CD4-positive, alpha-beta T cell (primary cell): ENCODE measurements at regions of chr13 and their contacts with region 1.

Region 1: GRCh38 chr13:27424246-27425157 is at the start of gene GTF3A:
- DNase-seq: peak; percentile 69 to 97 (median 87)
- ATAC-seq: peak; percentile 53
- H3K4me3 ChIP-seq: peak within 1 kb of the TSS; percentile 79
- H3K4me3 Mint-ChIP-seq: peak within 1 kb of the TSS; percentile 90
- H3K27ac ChIP-seq: peak within 1 kb of the TSS; percentile 91 to 95
- H3K27ac Mint-ChIP-seq: peak within 1 kb of the TSS; percentile 95
- H3K4me1 ChIP-seq: peaks cover 50% of the 10 kb centered on the region
- H3K4me1 Mint-ChIP-seq: peaks cover 39% of the 10 kb centered on the region
- H3K27me3 ChIP-seq: no peaks in the 10 kb centered on the region
- H3K27me3 Mint-ChIP-seq: no peaks in the 10 kb centered on the region
- CTCF ChIP-seq: no peak
- total RNA-seq, gene GTF3A: 129 to 132 TPM

Region 2: DNA sequence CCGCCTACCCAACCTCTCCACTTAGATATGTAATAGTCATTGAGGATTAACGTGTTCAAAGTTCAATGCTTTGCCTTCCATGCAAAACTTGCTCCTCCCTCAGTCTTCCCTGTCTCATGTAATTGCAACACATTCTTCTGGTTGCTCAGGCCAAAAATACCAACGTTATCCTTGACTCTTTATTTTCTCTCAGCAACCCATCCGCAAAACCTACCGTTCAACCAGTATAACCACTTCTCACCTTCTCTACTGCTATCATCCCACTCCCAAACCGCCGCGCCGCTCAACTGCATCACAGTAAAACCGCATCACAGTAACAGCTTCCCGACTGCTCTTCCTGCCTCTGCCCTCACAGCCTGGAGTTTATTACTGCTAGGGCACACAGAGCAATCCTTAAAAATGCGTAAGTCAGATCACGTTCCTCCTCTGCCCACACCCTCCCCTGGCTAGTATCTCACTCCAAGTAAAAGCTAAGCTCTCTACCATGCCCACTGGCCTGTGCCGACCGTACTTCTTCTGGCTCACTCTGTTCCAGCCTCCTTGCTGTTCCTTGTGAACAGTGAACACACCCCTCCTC is 17.7 kb after region 1 on chr13:
- CTCF ChIA-PET with region 1: interaction called, 26 read pairs
- POLR2A ChIA-PET with region 1: interaction called, 389 read pairs
- intact Hi-C with region 1: loop called (anchors 2 kb)
- DNase-seq: peak in 9 of 14 experiments; percentile 22 to 70 (median 51)
- ATAC-seq: peak; percentile 73
- H3K4me3 ChIP-seq: peak overlapping the region; percentile 25
- H3K4me3 Mint-ChIP-seq: peak overlapping the region; percentile 62
- H3K27ac ChIP-seq: peak overlapping the region; percentile 13 to 53
- H3K27ac Mint-ChIP-seq: peak overlapping the region; percentile 77
- H3K4me1 ChIP-seq: peaks cover 65% of the 10 kb centered on the region
- H3K4me1 Mint-ChIP-seq: peaks cover 60% of the 10 kb centered on the region
- H3K27me3 ChIP-seq: no peaks in the 10 kb centered on the region
- H3K27me3 Mint-ChIP-seq: no peaks in the 10 kb centered on the region
- CTCF ChIP-seq: no peak

Region 3: DNA sequence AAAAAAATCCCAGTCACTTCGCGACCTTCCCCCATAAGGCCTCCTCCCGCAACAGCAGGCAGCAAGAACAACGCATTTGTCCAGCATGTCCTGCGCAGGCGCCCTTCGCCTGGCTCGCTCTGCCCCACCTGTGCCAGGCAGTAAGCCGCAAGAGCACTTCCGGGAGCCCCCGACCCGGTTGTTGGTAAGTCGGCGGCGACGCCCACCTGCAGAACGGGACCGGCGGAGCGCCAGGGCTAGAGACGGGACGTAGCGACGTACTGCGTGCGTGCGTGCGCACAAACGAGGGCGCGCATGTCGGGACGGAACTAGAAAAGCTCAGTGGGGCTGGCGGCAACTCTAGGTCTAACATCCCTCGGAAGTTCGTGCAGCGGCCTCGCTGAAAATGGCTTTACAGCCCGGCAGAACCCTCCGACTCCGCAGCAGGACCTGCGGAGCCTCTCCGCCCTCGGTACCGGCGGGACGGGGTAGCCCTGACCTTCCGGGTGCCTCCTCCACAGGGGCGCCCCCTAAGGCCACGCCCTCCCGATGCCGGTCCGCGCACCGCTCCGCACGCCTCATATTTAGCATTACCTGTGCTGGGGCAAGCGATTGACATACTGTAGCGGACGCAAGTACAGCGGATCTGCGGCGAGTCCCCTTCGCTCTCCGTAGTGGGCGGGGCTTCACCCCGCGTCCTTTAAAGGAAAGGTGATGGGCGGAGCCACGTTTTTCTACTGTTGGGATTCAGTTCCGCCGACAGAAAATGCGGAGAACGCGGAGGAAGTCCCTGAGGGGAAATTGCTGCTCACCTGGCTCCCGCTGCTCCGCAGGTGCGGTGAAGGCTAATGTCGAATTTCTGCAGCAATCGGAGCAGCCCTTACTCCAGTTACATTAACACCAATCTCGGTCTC is 25.7 kb after region 1 on chr13 and contains the start of gene MTIF3:
- CTCF ChIA-PET with region 1: interaction called, 26 read pairs
- POLR2A ChIA-PET with region 1: interaction called, 389 read pairs
- intact Hi-C with region 1: loop called (anchors 1 kb)
- DNase-seq: peak; percentile 95 to 99 (median 97)
- ATAC-seq: peak; percentile 79
- H3K4me3 ChIP-seq: peak within 1 kb of the TSS; percentile 83
- H3K4me3 Mint-ChIP-seq: peak within 1 kb of the TSS; percentile 98
- H3K27ac ChIP-seq: peak within 1 kb of the TSS; percentile 95 to 97
- H3K27ac Mint-ChIP-seq: peak within 1 kb of the TSS; percentile 97
- H3K4me1 ChIP-seq: peaks cover 58% of the 10 kb centered on the region
- H3K4me1 Mint-ChIP-seq: peaks cover 74% of the 10 kb centered on the region
- H3K27me3 ChIP-seq: no peaks in the 10 kb centered on the region
- H3K27me3 Mint-ChIP-seq: no peaks in the 10 kb centered on the region
- CTCF ChIP-seq: peak; percentile 31
- total RNA-seq, gene MTIF3: 13.6 to 14.5 TPM

Region 4: DNA sequence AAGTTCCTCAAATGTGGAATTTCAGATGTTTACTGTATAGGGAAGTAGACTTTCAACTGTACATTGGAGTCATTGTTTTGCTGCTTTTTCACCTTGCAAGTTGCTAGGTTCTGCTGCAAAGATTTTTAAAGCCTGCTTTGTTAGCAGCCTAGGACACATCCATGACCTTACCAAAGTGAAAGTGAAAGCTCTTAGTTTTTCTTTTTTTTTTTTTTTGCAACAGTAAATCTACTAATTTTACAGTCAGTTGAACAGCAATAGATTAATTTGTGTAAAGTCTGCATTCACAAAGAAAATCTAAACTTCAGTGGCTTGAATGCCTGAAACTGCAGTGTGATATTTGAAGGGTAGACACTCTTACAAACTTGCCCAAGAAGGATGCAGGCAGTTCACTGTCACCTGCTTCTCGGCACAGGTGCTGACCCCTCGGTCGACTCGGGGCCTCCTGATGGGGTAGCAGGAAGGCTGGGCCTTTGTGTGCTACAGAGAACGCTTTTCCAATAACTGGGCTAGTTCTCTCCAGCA is 30.9 kb after region 1 on chr13:
- CTCF ChIA-PET with region 1: interaction called, 23 read pairs
- POLR2A ChIA-PET with region 1: interaction called, 389 read pairs
- intact Hi-C with region 1: loop called (anchors 1 kb)
- DNase-seq: peak in 3 of 14 experiments; percentile 30 to 41 (median 38)
- ATAC-seq: no peak
- H3K4me3 ChIP-seq: peak overlapping the region; percentile 64
- H3K4me3 Mint-ChIP-seq: peak overlapping the region; percentile 94
- H3K27ac ChIP-seq: peak overlapping the region; percentile 55 to 81
- H3K27ac Mint-ChIP-seq: peak overlapping the region; percentile 94
- H3K4me1 ChIP-seq: peaks cover 29% of the 10 kb centered on the region
- H3K4me1 Mint-ChIP-seq: peaks cover 42% of the 10 kb centered on the region
- H3K27me3 ChIP-seq: no peaks in the 10 kb centered on the region
- H3K27me3 Mint-ChIP-seq: no peaks in the 10 kb centered on the region
- CTCF ChIP-seq: no peak

Region 5: DNA sequence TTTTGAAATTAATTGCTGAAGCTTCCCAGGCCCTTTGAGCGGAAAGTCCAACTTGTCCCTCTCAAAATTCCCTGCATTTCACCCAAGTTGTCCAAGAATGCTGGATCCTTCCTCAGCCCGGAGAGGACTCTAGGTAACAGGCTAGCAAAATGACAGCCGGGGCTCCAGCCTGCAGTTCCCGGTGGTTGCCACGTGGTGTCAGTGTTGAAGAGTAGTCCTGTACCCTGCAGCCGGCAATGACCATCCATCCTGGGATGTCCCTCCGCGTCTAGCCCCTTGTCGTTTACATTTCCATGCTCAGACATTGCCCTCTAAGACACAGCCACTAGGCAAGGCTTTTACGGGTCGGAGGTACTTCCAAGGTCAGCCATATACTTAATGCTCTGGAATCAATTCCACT is 57.3 kb after region 1 on chr13:
- CTCF ChIA-PET with region 1: no interaction called
- POLR2A ChIA-PET with region 1: interaction called, 10 read pairs
- intact Hi-C with region 1: loop called in 1 of 2 experiments (anchors 2 kb)
- DNase-seq: peak in 5 of 14 experiments; percentile 5 to 35 (median 16)
- ATAC-seq: no peak
- H3K4me3 ChIP-seq: no peak overlapping the region
- H3K4me3 Mint-ChIP-seq: no peak overlapping the region
- H3K27ac ChIP-seq: no peak overlapping the region
- H3K27ac Mint-ChIP-seq: no peak overlapping the region
- H3K4me1 ChIP-seq: peaks cover 6% of the 10 kb centered on the region
- H3K4me1 Mint-ChIP-seq: peaks cover 19% of the 10 kb centered on the region
- H3K27me3 ChIP-seq: no peaks in the 10 kb centered on the region
- H3K27me3 Mint-ChIP-seq: no peaks in the 10 kb centered on the region
- CTCF ChIP-seq: peak; percentile 30

Region 6: GRCh38 chr13:28658796-28659620 is 1234.5 kb after region 1 on chr13 and contains the start of gene POMP:
- CTCF ChIA-PET with region 1: no interaction called
- POLR2A ChIA-PET with region 1: no interaction called
- intact Hi-C with region 1: loop called in 1 of 2 experiments (anchors 5 kb)
- DNase-seq: peak; percentile 86 to 95 (median 89)
- ATAC-seq: peak; percentile 84
- H3K4me3 ChIP-seq: peak within 1 kb of the TSS; percentile 84
- H3K4me3 Mint-ChIP-seq: peak within 1 kb of the TSS; percentile 98
- H3K27ac ChIP-seq: peak within 1 kb of the TSS; percentile 92 to 95
- H3K27ac Mint-ChIP-seq: peak within 1 kb of the TSS; percentile 99
- H3K4me1 ChIP-seq: peaks cover 27% of the 10 kb centered on the region
- H3K4me1 Mint-ChIP-seq: peaks cover 72% of the 10 kb centered on the region
- H3K27me3 ChIP-seq: no peaks in the 10 kb centered on the region
- H3K27me3 Mint-ChIP-seq: no peaks in the 10 kb centered on the region
- CTCF ChIP-seq: no peak
- total RNA-seq, gene POMP: 25.8 to 28.5 TPM